ENCODE measurements at regions of chr7 and their contacts with region 1.

Region 1: GRCh38 chr7:112206238-112207044 is at the starts of genes DOCK4 and ZNF277:
- DNase-seq: peak; percentile 98
- H3K4me3 Mint-ChIP-seq: peak within 1 kb of the TSS; percentile 100
- H3K27ac Mint-ChIP-seq: peak within 1 kb of the TSS; percentile 92
- H3K4me1 Mint-ChIP-seq: peaks cover 34% of the 10 kb centered on the region
- H3K27me3 Mint-ChIP-seq: peaks cover 31% of the 10 kb centered on the region
- total RNA-seq, gene DOCK4: 0.31 and 0.37 TPM in 2 replicates
- total RNA-seq, gene ZNF277: 12.1 and 14.0 TPM in 2 replicates

Region 2: GRCh38 chr7:111113263-111114017 is 1093.0 kb before region 1 on chr7:
- intact Hi-C with region 1: loop called (anchors 10 kb)
- DNase-seq: no peak
- H3K4me3 Mint-ChIP-seq: peak overlapping the region; percentile 30
- H3K27ac Mint-ChIP-seq: peak overlapping the region; percentile 83
- H3K4me1 Mint-ChIP-seq: peaks cover 43% of the 10 kb centered on the region
- H3K27me3 Mint-ChIP-seq: no peaks in the 10 kb centered on the region

Region 3: DNA sequence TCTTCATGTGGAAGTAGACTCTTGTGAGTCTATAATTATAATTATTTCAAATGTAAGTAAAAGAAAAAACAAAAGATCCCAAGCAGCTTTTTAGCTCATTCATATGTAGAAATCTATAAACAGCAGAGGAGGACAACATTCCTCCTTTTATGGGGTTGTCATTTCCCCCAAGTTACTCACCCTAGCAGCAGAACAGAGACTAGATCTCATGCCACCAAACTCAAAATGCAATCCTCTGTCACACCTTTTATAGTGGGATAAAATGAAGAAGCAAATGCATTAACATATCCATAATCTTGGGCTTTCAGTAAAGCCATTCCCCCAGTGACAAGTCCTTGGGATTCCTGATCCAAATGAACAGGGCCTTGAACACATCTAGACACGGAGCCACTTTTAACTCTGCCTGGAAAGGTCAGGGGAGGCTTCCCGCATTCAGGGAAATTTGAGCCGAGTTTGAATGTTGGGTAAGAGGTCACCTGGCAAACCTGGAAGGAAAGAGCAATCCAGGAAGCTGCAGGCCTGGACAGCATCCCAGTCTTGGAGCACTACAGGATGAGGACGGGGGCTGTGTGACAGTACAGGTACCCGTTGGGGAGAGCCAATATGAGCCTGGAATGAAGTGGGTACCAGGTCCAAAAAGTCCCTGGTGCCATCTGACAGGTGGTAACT is 76.7 kb before region 1 on chr7:
- intact Hi-C with region 1: no loop called
- DNase-seq: no peak
- H3K4me3 Mint-ChIP-seq: no peak overlapping the region
- H3K27ac Mint-ChIP-seq: no peak overlapping the region
- H3K4me1 Mint-ChIP-seq: no peaks in the 10 kb centered on the region
- H3K27me3 Mint-ChIP-seq: no peaks in the 10 kb centered on the region

Region 4: DNA sequence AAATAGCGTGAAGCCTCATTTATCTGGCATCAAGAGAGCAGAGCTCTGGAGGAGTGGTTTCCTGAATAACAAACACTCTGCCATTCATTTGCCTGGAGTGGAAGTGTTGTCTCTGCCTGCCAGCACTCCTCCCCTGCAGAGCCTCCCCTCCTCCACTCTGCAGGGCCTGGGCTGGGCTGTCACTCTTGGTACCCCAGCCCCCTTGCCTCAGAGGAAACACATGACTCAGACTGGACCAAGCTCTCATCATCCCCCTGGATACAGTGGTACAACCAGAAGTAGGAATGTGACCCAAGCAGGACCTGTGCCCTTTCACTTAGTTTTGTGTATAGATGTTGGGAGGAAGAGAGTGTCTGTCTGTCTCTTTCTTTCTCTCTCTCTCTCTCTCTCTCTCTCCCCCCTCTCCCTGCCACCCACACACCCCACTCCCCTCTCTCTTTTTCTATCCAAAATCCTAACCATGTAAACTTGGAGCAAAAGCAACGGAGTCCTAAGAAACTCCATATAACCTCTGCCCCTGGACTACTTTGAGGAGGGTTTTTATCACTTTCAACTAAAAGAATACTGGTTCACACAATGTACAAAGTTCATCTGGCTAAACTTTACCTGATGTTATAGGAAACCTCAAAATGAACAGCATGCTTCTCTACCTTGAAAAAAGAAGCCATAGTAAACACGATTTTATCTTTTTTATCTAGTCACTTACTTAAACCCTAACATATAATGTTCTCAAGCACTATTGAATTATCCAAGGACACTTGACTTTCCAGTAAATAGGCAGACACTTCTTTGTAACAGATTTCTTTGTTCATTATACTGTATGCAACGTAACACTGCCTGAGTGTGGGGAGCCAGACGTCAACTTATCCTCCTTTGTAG is 44.1 kb before region 1 on chr7:
- intact Hi-C with region 1: no loop called
- DNase-seq: no peak
- H3K4me3 Mint-ChIP-seq: no peak overlapping the region
- H3K27ac Mint-ChIP-seq: no peak overlapping the region
- H3K4me1 Mint-ChIP-seq: no peaks in the 10 kb centered on the region
- H3K27me3 Mint-ChIP-seq: peaks cover 13% of the 10 kb centered on the region

Region 5: DNA sequence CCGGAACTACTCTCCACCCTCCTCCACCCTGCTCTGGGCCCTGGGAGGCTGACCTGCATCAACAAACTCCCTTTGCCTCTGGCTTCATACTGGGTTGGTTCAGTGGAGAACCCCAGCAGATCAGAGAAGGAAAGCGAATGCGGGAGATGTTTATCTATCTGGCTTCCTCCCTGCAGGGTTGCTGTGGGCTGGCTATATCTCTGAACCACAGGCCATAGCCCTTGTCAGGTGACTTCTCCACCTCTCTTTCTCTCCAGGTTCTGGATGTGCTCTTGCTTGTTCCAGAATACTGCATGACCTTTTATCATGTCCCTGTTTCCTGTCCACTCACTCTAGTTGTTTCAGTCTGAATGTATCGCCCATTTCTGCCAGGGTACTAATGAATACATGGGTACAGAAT is 192.1 kb after region 1 on chr7:
- intact Hi-C with region 1: loop called (anchors 2 kb)
- DNase-seq: no peak
- H3K4me3 Mint-ChIP-seq: no peak overlapping the region
- H3K27ac Mint-ChIP-seq: no peak overlapping the region
- H3K4me1 Mint-ChIP-seq: peaks cover 13% of the 10 kb centered on the region
- H3K27me3 Mint-ChIP-seq: peaks cover 19% of the 10 kb centered on the region

Region 6: DNA sequence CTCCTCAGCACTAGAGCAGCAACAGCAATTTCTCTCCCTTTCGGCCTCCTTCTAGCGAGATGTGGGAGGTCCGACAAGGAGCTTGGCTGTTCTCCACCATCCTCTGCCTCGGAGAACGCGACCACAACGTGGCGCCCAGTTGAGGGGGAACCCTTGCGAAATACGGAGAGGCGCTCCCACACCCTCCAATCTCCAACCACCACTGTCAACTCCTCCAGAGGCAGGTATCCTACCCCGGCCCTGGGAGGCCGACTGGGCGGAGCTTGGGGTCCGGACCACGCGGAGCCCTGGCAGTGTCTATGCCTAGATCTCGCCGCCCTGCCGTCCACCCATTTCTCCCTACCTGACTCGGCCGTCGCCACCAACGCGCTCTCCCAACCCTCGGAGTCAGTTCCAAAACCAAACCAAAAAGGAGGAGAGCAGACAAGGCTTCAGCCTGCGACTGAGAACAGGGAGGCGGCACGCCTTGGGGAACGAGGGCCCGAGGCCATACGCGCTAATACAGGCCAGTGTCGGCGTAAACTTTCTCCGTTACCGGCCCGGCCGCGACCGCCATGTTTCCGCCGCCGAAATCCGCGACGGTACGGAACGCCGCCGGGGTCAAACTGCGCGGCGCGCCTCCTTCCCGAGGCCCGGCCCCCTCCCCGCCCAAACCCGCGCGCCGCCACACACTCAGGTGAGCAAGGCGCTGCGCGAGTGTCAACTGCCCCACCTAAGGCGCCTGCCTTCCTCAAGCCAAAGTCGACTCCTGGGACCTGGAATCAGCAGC is 583.6 kb after region 1 on chr7 and contains the start of gene TMEM168:
- intact Hi-C with region 1: loop called (anchors 5 kb)
- DNase-seq: peak; percentile 77
- H3K4me3 Mint-ChIP-seq: peak within 1 kb of the TSS; percentile 96
- H3K27ac Mint-ChIP-seq: peak within 1 kb of the TSS; percentile 85
- H3K4me1 Mint-ChIP-seq: peaks cover 41% of the 10 kb centered on the region
- H3K27me3 Mint-ChIP-seq: no peaks in the 10 kb centered on the region
- total RNA-seq, gene TMEM168: 18.1 and 18.2 TPM in 2 replicates

Region 7: DNA sequence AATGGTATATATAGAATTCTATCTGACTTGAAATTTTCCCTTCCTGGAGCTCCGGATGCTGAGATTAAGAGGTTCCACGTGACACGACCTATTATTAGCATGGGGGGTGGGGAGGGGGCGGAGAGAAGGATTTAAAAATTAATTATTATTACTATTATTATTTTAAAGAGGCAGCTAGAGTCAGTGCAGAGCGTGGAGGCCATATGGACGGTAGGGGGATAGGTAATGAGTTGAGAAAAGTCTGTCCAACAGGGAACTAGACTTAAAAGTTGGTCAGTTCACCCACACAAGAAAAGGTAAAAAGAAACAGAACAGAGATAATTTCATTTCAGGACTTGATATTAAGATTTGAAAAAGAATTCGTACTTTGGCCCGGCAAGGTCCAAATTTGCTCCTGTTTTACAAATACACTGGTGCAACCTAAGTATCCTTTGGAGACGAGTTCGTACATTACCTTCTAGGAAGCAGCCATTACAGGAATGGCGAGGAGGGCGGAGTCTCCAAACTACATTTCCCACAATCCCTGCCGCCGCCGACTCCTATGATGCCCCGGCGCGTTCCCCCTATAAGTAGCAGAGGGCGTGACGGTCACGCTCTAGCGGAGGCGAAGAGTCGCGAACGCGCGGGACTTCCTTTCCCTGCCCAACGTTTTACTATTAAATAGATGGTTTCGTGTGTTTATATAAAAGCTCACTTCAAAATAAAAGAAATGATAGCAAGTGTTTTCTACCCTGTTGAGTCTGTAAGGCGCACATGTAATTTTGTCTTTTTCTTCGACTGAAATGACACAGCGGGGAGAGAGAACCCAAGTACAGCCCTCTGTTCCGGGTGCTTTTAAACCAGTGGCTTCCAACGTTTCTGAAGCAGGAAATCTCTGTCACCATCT is 911.9 kb after region 1 on chr7 and contains the start of gene SMIM30:
- intact Hi-C with region 1: loop called (anchors 1 kb)
- DNase-seq: peak; percentile 83
- H3K4me3 Mint-ChIP-seq: peak within 1 kb of the TSS; percentile 93
- H3K27ac Mint-ChIP-seq: peak within 1 kb of the TSS; percentile 92
- H3K4me1 Mint-ChIP-seq: peaks cover 46% of the 10 kb centered on the region
- H3K27me3 Mint-ChIP-seq: no peaks in the 10 kb centered on the region
- total RNA-seq, gene SMIM30: 32.4 and 36.8 TPM in 2 replicates